PC-9 (cell line): ENCODE measurements at regions of chr2 and their contacts with region 1.

Region 1: DNA sequence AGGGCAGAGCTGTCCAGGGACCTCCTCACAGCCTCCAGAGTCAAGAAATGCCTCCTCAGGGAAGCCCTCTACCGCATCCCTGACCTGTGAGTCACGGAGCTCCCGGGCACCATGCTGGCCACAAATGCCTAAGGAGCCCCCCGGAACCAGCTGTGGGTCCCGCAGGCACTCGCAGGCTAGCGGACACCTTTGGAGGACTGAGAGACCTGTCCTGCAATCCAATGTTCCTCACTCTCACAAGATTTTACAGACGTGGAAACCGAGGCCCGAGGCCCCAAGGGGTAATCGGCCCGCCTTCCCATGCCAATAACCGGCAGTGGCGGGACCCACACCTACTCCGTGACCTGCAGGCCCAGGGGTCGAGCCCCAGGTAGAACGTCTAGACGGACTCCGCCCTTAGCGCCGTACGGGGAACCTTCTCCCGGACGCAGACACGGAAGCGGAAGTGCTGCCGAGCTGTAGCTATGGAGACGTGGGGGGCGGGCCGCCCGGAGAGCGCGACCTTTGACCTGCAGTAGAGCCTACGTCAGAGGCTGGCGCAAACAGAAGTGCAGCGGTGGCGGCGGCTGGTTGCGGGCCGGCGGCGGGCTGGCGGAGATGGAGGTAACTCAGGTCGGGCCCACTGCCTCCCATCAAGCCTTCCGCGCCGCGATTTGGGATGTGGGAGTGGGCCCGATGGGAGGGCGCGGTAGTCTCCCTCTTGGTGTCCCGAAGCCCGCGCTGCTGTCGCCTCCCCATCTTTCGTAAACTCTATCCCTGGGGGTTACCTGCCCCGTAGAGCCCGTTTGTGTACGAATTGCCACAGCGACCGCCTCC is at the start of gene GCC2:
- DNase-seq: peak; percentile 88 to 93
- H3K4me3 ChIP-seq: peak within 1 kb of the TSS; percentile 90
- H3K27ac ChIP-seq: peak within 1 kb of the TSS; percentile 62
- H3K4me1 ChIP-seq: peaks cover 18% of the 10 kb centered on the region
- H3K27me3 ChIP-seq: no peaks in the 10 kb centered on the region
- CTCF ChIP-seq: no peak
- total RNA-seq, gene GCC2: 33.3 and 49.1 TPM in 2 replicates

Region 2: DNA sequence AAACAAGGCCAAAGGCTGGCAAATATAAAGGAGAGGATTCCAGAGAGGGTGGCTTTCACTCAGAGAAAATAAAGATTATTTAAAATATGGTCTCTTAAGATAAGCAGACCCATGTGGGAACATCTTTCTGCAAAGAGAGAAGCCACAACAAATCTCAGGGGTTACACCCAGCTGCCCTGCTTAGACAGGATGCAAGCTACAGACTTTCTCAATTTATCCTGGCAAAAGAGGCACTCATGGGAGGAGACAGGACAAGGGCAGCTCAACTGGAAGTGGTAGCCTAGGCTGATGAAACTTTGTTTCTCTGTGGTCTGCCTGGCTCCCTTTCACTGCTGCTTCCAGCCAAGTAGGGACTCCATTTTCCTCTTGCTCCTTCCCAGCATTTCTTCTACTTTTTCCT is 97.0 kb before region 1 on chr2:
- CTCF ChIA-PET with region 1: no interaction called
- POLR2A ChIA-PET with region 1: no interaction called
- intact Hi-C with region 1: loop called (anchors 2 kb)
- DNase-seq: no peak
- H3K4me3 ChIP-seq: no peak overlapping the region
- H3K27ac ChIP-seq: no peak overlapping the region
- H3K4me1 ChIP-seq: no peaks in the 10 kb centered on the region
- H3K27me3 ChIP-seq: no peaks in the 10 kb centered on the region
- CTCF ChIP-seq: no peak

Region 3: GRCh38 chr2:108565778-108566375 is 117.0 kb after region 1 on chr2:
- CTCF ChIA-PET with region 1: no interaction called
- POLR2A ChIA-PET with region 1: no interaction called
- intact Hi-C with region 1: no loop called
- DNase-seq: no peak
- H3K4me3 ChIP-seq: no peak overlapping the region
- H3K27ac ChIP-seq: no peak overlapping the region
- H3K4me1 ChIP-seq: peaks cover under 1% of the 10 kb centered on the region; the same call in 1 of the 2 replicates
- H3K27me3 ChIP-seq: no peaks in the 10 kb centered on the region
- CTCF ChIP-seq: no peak